ENCODE measurements at regions of chr9 and their contacts with region 1.

Region 1: DNA sequence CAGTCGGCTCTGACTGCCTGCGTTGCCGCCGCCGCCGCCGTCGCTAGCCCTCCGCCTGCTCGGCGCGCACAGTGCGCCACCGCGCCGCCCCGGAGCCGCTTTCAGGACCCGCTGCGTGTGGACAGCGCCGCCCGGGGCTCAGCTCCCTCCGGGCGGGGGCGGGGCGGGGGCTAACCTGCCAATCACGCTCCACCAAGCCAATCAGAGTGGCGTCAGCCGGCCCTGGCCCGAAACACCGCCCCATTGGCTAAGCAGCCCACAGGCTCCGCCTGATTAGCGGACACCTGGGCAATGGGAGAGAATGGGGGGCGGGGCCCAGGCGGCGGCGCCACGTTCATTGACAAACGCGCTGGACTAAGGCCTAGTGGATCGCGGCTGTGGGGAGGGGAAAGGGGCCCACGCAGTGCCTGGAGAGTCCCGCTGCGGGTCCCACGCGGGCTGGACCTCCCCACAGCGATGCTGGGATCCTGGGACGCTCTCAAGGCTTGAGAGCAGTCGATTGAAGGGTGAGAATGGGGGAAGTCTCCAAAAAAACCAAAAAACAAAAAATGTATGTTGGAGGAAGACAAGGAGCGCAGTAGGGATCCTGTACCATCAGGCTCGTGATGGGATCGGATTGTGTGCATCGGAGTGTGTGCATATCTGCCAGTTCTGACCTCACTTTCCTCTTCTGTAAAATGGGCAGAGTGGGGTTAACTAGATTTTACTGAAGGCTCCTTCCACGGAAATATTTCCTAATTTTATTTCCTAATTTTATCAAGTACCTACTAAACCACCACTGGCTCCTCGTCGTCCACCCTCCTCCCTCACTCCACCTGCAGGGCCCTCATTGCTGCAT is 6.3 kb downstream of the PAX5 start:
- DNase-seq: peak; percentile 99
- CTCF ChIP-seq: no peak

Region 2: DNA sequence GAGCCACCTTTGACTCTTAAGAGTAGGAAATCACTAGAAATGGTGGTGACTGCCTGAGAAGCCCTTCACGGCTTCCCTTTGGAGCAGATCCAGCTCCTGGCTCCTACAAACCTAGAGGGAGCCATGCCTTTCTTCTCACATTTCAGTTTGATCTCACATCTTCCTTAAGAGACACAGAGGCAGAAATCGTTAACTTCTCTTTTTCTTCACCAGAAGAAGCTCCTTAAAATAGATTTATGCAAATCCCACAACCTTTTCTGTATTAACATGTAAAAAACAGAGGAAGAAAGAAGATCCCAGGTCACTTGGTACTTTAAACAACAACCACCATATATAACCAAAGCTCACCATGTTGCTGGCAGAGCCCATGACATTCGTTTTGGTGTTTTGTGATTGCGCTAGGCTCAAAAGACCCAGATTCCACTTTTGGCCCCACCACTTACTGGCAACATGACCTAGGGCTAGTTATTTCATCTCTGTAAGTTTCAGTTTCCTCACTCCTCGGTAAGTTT is 23.3 kb before region 1 on chr9:
- CTCF ChIA-PET with region 1: interaction called, 58 read pairs
- POLR2A ChIA-PET with region 1: interaction called, 3 read pairs
- DNase-seq: peak; percentile 29
- CTCF ChIP-seq: no peak

Region 3: GRCh38 chr9:37010180-37010579 is 17.6 kb before region 1 on chr9:
- CTCF ChIA-PET with region 1: interaction called, 58 read pairs
- POLR2A ChIA-PET with region 1: interaction called, 3 read pairs
- DNase-seq: peak; percentile 46
- CTCF ChIP-seq: no peak

Region 4: GRCh38 chr9:37126214-37126788 is 98.5 kb after region 1 on chr9:
- CTCF ChIA-PET with region 1: no interaction called
- POLR2A ChIA-PET with region 1: interaction called, 14 read pairs
- DNase-seq: no peak
- CTCF ChIP-seq: no peak

Measured in GM10248 (cell line).